ENCODE measurements at regions of chr6 and their contacts with region 1.

Region 1: DNA sequence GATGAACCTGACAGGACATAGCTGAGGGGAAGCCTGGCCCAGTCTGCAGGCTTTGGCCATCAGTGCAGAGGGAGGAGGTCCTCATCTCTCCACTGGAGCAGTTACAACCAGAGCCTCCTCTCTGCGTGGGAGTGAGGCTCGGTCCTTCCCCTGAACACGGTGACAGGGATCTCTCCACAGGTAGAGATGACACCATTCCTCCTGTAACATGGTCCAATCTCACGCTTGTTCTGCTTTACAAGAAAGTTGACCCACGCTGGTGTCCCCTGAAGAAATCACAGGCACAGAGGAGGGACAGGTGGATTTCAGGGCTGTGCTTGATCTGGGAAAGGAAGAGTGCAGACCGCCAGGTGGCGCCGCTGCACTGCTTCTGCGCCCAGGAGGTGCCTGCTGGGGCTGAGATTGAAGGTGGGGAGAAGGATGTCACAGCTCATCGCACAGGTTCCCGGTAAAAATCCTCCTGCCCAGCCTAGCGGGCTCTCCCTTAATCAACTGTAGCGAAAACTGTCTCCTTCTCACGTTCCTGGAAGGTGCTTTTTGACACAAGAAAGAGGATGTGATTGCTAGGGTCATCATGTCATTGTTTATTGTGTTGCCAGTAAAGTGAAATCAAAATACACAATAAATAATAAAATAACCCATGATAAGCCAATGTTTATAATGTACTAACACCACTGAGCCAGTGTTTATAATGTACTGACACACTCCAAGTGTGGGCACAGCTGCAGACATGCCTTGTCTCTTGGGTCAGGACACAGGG is 20.4 kb downstream of the HLA-G start:
- DNase-seq: peak; percentile 89
- H3K4me3 Mint-ChIP-seq: no peak overlapping the region
- H3K27ac Mint-ChIP-seq: no peak overlapping the region
- H3K4me1 Mint-ChIP-seq: peaks cover 31% of the 10 kb centered on the region
- H3K27me3 Mint-ChIP-seq: peaks cover 77% of the 10 kb centered on the region

Region 2: DNA sequence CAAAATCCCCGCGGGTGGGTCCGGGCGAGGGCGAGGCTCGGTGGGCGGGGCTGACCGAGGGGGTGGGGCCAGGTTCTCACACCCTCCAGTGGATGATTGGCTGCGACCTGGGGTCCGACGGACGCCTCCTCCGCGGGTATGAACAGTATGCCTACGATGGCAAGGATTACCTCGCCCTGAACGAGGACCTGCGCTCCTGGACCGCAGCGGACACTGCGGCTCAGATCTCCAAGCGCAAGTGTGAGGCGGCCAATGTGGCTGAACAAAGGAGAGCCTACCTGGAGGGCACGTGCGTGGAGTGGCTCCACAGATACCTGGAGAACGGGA is 19.6 kb before region 1 on chr6:
- CTCF ChIA-PET with region 1: no interaction called
- DNase-seq: peak; percentile 43
- H3K4me3 Mint-ChIP-seq: no peak overlapping the region
- H3K27ac Mint-ChIP-seq: no peak overlapping the region
- H3K4me1 Mint-ChIP-seq: peaks cover 13% of the 10 kb centered on the region
- H3K27me3 Mint-ChIP-seq: peaks cover 83% of the 10 kb centered on the region

Region 3: DNA sequence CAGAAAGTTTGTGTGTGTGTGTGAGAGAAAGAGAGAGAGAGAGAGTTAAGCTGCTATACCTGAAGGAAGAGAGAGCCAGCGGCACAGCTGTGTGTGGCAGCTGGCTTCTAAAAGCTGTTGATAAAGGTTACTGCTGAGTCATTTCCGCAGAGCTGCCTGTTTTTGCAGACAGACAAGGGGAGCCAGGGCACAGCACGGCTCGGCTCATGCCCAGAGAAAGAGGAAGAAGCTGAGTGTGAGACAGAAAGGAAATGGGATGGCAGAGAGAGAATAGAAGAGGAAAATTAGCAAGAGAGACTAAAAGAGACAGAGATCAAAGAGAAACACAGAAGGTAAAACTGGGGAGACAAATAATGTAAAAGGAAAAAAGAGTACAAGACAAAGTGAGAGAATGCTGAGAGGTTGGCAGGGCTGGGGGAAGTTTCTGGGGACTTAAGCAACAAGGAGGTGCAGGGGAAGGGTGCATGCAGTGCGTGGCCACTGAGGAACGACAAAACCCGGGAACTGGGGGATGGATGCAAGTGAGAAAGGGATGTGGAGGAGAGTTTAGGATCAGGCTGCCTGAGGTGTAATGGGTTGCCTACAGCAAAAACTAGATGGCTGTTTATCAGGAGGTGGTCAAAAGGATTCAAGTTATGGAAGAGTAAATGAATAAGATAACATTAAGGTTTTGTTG is 117.0 kb after region 1 on chr6:
- CTCF ChIA-PET with region 1: interaction called, 48 read pairs
- DNase-seq: peak; percentile 88
- H3K4me3 Mint-ChIP-seq: peak overlapping the region; percentile 81
- H3K27ac Mint-ChIP-seq: peak overlapping the region; percentile 95
- H3K4me1 Mint-ChIP-seq: peaks cover 48% of the 10 kb centered on the region
- H3K27me3 Mint-ChIP-seq: no peaks in the 10 kb centered on the region

Region 4: DNA sequence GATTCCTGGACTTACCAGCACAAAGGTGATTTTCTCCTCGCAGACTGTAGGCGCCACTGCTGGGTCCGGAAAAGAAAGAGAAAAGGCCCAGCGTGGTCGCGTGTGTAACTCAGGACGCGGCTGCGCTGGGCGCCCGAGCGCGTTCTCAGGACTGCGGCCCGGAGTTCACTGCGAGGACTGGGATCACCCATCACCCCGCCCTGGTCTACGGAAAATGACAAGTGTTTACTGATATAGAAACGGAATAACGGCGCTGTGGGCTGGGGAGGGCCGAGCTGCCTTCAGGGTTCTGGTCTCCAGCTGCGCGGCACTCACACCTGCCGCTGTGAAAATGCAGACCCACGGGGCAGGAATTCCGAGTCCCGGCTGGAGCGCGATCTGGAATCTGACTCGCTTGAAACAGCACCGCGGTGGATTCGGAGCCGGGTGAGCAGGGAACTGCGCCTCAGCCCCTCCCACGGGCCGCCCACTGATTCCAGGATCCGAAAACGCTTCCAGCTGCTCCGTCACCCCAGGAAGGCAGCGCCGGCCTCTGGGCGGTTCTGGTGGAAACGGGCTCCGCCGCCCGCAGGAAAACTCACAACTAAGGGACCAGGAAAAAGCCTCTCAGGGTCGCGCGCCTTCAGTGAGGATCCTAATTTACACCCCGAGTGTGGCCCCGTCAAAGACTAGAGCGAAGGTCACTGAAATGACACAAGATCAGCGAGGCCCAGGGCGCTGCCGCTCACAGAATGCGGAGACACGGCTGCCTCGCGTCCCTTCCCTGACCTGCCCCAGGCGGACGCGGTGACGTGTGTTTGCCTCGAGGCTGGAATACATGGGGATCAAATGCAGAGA is 128.8 kb after region 1 on chr6:
- CTCF ChIA-PET with region 1: interaction called, 10 read pairs
- DNase-seq: peak; percentile 74
- H3K4me3 Mint-ChIP-seq: peak overlapping the region; percentile 69
- H3K27ac Mint-ChIP-seq: no peak overlapping the region
- H3K4me1 Mint-ChIP-seq: peaks cover 52% of the 10 kb centered on the region
- H3K27me3 Mint-ChIP-seq: peaks cover 78% of the 10 kb centered on the region

Region 5: DNA sequence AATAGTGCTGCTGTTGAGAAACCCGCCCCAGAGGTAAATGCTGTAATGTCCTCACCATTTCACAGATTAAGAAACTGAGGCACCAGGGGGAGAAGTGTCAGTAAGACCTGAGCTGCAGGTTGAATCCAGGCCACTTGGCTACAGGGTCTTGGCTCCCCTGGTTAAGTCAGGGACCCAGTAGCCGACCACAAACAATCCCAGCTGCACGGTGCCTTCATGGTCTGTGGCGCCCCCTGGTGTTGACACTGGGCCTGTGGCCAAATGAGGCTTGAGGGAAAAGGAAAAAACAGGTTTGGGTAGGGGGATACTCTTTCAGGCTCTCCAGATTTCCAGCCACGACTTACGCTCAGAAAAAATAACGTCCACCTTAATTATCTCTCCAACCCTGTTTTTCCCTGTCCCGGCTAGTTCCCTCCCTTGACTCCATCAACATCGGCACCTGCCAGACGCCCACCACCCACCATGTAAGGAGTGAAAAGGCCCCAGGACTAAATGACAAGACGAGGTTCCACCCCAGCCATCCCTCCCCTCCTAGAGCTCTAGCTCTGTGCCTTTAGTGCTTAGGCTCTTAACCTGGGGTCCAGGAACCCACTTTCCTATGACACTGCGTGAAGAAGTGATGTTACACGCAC is 165.4 kb after region 1 on chr6:
- CTCF ChIA-PET with region 1: interaction called, 36 read pairs
- DNase-seq: peak; percentile 67
- H3K4me3 Mint-ChIP-seq: no peak overlapping the region
- H3K27ac Mint-ChIP-seq: no peak overlapping the region
- H3K4me1 Mint-ChIP-seq: no peaks in the 10 kb centered on the region
- H3K27me3 Mint-ChIP-seq: peaks cover 24% of the 10 kb centered on the region